OCI-LY7 (cell line): ENCODE measurements at regions of chr9 and their contacts with region 1.

Region 1: DNA sequence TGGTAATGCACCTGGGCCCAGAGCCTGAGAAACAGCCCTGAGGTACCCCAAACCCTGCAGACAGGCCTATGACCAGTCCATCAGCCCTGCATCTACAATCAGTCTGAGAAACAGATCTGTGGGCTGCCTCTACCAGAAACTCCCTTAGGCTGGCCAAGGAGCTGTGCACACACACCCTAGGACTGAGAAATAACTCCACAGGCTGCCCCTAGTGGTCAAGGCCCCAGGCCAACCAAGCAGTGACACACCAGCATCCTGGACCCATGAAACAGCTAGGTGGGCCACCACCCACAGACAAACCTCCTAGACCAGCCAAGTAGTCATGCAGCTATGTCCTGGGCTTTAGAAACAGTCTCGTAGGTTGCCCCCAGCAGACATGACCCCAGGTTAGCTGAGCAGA is 253.6 kb upstream of the VLDLR start:
- DNase-seq: peak; percentile 8
- H3K4me3 ChIP-seq: no peak overlapping the region
- H3K27ac ChIP-seq: no peak overlapping the region
- H3K4me1 ChIP-seq: no peaks in the 10 kb centered on the region
- CTCF ChIP-seq: peak; percentile 42

Region 2: GRCh38 chr9:2389404-2389803 is 21.4 kb after region 1 on chr9:
- CTCF ChIA-PET with region 1: no interaction called
- POLR2A ChIA-PET with region 1: no interaction called
- intact Hi-C with region 1: loop called (anchors 2 kb)
- DNase-seq: no peak
- H3K4me3 ChIP-seq: no peak overlapping the region
- H3K27ac ChIP-seq: no peak overlapping the region
- H3K4me1 ChIP-seq: no peaks in the 10 kb centered on the region
- CTCF ChIP-seq: no peak